CD14-positive monocyte (primary cell): ENCODE measurements at regions of chr4 and their contacts with region 1.

Region 1: GRCh38 chr4:16253127-16253960 is 27.1 kb upstream of the TAPT1 start:
- DNase-seq: no peak
- H3K4me3 ChIP-seq: no peak overlapping the region
- H3K4me3 Mint-ChIP-seq: no peak overlapping the region
- H3K27ac ChIP-seq: no peak overlapping the region
- H3K27ac Mint-ChIP-seq: no peak overlapping the region
- H3K4me1 ChIP-seq: no peaks in the 10 kb centered on the region
- H3K4me1 Mint-ChIP-seq: peaks cover 6% of the 10 kb centered on the region
- H3K27me3 ChIP-seq: no peaks in the 10 kb centered on the region
- H3K27me3 Mint-ChIP-seq: peaks cover 0 to 1% (median 0%) of the 10 kb centered on the region in 3 donors
- CTCF ChIP-seq: no peak

Region 2: DNA sequence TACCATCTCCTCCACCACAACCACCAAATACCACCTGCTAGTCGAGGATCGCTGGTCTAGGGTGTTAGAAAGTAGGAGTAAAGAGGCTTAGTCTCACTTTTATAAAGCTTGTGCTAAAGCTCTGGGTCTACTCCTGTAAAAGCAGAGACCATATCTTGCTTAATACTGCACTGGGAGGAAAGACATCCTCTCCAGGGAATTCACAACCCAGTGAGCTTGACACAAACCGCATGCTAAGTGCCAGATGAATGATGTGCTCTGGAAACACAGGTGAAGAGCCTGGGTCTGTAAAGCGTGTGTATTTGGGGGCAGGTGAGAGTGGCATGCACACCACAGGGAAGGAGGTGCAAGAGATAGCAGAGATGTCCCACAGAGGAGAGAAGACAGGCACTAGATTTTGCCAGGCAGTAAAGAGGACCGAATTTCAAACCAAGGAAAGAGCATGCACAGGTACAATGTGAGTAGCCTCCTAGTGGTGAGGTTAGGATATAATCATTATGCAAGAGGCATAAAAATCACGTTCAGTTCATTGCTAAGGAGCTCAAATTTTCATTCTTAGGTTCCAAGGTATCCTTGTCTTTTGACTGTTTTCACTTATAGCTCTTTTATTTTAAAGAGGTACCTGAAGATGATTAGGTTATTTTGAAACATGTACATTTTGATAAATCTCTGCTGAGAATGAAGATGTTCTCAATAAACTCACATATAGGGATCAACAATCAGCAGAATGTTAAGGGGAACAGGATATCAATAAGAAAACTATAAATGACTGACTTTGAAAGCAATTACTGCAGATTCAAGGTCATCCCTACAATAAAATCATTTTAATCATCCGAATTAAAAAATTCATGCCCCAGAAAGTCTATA is 47.8 kb before region 1 on chr4:
- intact Hi-C with region 1: loop called in 1 of 2 experiments (anchors 10 kb)
- DNase-seq: peak in 2 of 3 donors; percentile 19 to 34
- H3K4me3 ChIP-seq: no peak overlapping the region
- H3K4me3 Mint-ChIP-seq: no peak overlapping the region
- H3K27ac ChIP-seq: peak overlapping the region in 1 of 2 donors; percentile 2
- H3K27ac Mint-ChIP-seq: peak overlapping the region in 3 of 7 donors; percentile 67 to 73 (median 73)
- H3K4me1 ChIP-seq: peaks cover 16 to 36% of the 10 kb centered on the region in 2 donors
- H3K4me1 Mint-ChIP-seq: peaks cover 46% of the 10 kb centered on the region
- H3K27me3 ChIP-seq: no peaks in the 10 kb centered on the region
- H3K27me3 Mint-ChIP-seq: peaks cover 0 to 2% (median 0%) of the 10 kb centered on the region in 3 donors
- CTCF ChIP-seq: peak; percentile 78

Region 3: DNA sequence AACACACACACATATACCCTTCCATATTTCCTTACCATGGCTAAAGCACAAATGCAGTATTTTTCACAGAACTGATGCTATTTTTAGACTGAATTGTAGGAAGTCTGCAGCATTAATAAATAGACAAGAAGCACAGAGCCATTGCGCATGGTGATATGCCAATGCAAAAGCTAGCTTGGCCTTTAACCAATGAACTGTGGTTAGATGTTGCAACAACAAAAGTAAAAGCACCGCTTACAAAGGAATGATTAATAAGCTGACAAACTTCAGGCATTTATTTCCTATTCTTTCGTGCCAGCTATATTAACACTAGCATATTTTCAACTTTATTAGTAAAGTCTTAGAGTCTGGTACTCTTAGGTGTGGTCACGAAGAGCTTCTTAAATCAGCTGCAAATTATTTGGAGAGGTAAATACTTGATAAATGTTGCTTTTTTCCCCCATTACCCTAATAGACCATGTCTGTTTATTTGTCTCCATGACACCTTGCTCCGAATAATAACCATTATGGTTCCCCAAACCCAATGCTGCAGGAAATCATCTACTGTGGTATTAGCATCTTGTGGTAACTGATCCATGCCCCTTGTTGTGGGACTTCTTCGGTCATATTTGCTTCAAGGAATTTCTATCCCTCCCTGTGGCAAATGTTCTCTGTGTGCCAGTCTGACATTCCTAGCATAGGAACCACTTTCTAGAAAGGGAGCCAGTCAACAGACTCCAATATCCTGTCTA is 279.1 kb after region 1 on chr4:
- intact Hi-C with region 1: no loop called
- DNase-seq: no peak
- H3K4me3 ChIP-seq: no peak overlapping the region
- H3K4me3 Mint-ChIP-seq: no peak overlapping the region
- H3K27ac ChIP-seq: no peak overlapping the region
- H3K27ac Mint-ChIP-seq: no peak overlapping the region
- H3K4me1 ChIP-seq: peaks cover 9 to 19% of the 10 kb centered on the region in 2 donors
- H3K4me1 Mint-ChIP-seq: peaks cover 27% of the 10 kb centered on the region
- H3K27me3 ChIP-seq: no peaks in the 10 kb centered on the region
- H3K27me3 Mint-ChIP-seq: peaks cover 0 to 2% (median 0%) of the 10 kb centered on the region in 3 donors
- CTCF ChIP-seq: no peak